ENCODE measurements at regions of chr3 and their contacts with region 1.

Region 1: GRCh38 chr3:51434746-51435327 is 43.8 kb downstream of the RBM15B start:
- DNase-seq: no peak
- H3K4me3 ChIP-seq: no peak overlapping the region
- H3K27me3 ChIP-seq: no peaks in the 10 kb centered on the region
- CTCF ChIP-seq: peak; percentile 73

Region 2: GRCh38 chr3:51422211-51422610 is 12.6 kb before region 1 on chr3:
- CTCF ChIA-PET with region 1: interaction called, 17 read pairs
- POLR2A ChIA-PET with region 1: no interaction called
- DNase-seq: no peak
- H3K4me3 ChIP-seq: no peak overlapping the region
- H3K27me3 ChIP-seq: no peaks in the 10 kb centered on the region
- CTCF ChIP-seq: no peak

Region 3: GRCh38 chr3:51445544-51446280 is 10.9 kb after region 1 on chr3:
- CTCF ChIA-PET with region 1: interaction called, 10 read pairs
- POLR2A ChIA-PET with region 1: no interaction called
- DNase-seq: no peak
- H3K4me3 ChIP-seq: no peak overlapping the region
- H3K27me3 ChIP-seq: no peaks in the 10 kb centered on the region
- CTCF ChIP-seq: no peak

Measured in BJ (cell line).